ENCODE measurements at regions of chr22 and their contacts with region 1.

Region 1: DNA sequence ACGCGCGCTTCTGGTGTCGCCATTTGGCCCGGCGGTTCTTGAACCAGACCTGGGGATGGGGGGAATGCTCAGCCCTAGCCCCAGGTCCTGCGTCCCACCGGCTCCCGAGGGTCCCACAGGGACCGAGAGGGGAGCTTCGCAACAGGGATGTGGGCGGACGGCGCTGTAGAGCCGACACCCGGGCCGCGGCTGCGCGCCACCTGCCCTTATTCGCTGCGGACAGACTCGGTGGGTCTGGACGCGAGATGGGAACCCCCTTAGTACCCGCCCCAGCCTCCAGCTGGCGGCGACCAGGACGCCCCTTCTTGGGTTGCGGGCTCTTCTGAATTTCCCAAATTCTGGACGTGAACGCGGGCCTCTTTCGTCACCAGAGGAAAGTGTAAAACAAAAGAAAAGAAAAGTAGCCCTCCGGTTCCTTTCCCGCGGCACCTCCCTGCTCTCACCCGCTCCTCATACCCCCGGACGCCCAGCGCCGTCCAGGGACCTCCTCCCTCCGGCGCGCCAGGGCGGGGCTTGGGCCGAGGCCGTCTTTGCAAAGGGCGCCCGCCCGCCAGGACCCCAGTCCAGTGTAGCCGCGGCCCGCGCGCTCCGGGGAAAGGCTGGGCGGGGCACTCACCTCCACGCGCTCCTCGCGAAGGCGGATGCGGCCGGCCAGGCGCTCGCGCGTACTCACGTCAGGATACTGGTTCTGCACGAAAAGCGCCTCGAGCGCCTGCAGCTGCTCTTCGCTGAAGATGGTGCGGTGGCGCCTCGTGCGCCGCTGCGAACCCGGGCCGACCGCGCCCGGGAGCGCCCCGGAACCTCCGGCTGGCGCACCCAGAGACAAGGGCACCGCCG is 827 bp downstream of the GSC2 start:
- DNase-seq: no peak
- H3K4me3 ChIP-seq: no peak overlapping the region
- H3K27ac ChIP-seq: no peak overlapping the region
- H3K4me1 ChIP-seq: no peaks in the 10 kb centered on the region
- H3K27me3 ChIP-seq: peaks cover 4% of the 10 kb centered on the region
- CTCF ChIP-seq: no peak
- EP300 ChIP-seq: no peak
- POLR2A ChIP-seq: no peak

Region 2: GRCh38 chr22:19056951-19057401 is 92.3 kb before region 1 on chr22:
- intact Hi-C with region 1: no loop called
- DNase-seq: no peak
- H3K4me3 ChIP-seq: no peak overlapping the region
- H3K27ac ChIP-seq: no peak overlapping the region
- H3K4me1 ChIP-seq: no peaks in the 10 kb centered on the region
- H3K27me3 ChIP-seq: no peaks in the 10 kb centered on the region
- CTCF ChIP-seq: no peak
- EP300 ChIP-seq: no peak
- POLR2A ChIP-seq: no peak

Region 3: GRCh38 chr22:19168211-19168890 is 19.1 kb after region 1 on chr22:
- intact Hi-C with region 1: loop called in 1 of 4 experiments (anchors 2 kb)
- DNase-seq: no peak
- H3K4me3 ChIP-seq: no peak overlapping the region
- H3K27ac ChIP-seq: no peak overlapping the region
- H3K4me1 ChIP-seq: peaks cover 10% of the 10 kb centered on the region
- H3K27me3 ChIP-seq: no peaks in the 10 kb centered on the region
- CTCF ChIP-seq: no peak
- EP300 ChIP-seq: no peak
- POLR2A ChIP-seq: no peak

Region 4: GRCh38 chr22:19629720-19630419 is 480.6 kb after region 1 on chr22:
- intact Hi-C with region 1: loop called in 1 of 4 experiments (anchors 5 kb)
- DNase-seq: peak; percentile 58 to 77 (median 74)
- H3K4me3 ChIP-seq: no peak overlapping the region
- H3K27ac ChIP-seq: no peak overlapping the region
- H3K4me1 ChIP-seq: no peaks in the 10 kb centered on the region
- H3K27me3 ChIP-seq: no peaks in the 10 kb centered on the region
- CTCF ChIP-seq: peak; percentile 47 to 69 (median 67)
- EP300 ChIP-seq: no peak
- POLR2A ChIP-seq: no peak